Heart right ventricle (tissue), 16 donors: ENCODE measurements at regions of chr22 and their contacts with region 1.

Region 1: DNA sequence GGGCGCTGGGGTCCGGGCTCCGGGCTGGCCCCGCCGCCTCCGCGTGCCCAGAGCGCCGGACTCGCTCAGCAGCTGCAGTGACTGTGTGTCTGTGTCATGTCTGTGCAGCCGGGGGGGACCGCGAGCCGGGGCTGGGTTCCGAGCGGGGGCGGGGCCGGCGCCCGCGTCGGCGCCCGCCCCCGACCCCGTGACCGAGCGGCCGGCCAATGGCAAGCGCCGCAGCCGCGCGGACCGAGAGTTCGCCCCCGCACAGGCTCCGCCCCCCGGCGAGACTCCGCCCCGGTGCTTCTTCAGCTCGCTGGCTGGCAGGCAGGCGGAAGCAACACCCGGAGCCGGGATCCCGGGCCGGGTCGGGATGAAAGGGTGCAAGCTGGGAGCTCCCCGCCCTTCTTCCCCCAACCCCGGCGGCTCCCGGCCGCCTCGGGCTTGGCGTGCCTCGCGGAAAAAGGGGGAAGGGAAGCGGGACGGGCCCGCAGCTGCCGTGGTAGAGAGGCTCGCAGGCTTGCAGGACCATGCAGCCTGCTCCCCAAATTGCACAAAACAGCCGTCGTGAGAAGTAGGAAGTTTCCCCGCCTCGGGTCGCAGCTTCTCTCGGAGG is 750 bp upstream of the LARGE1 start:
- DNase-seq: peak; percentile 99
- ATAC-seq: peak; percentile 89 to 96 (median 94)
- H3K4me3 ChIP-seq: peak overlapping the region; percentile 49 to 87 (median 72)
- H3K27ac ChIP-seq: peak overlapping the region in 9 of 10 donors; percentile 63 to 91 (median 78)
- H3K4me1 ChIP-seq: peaks cover 0 to 56% (median 37%) of the 10 kb centered on the region in 9 donors
- H3K27me3 ChIP-seq: peaks cover 0 to 57% (median 0%) of the 10 kb centered on the region in 7 donors
- CTCF ChIP-seq: no peak

Region 2: DNA sequence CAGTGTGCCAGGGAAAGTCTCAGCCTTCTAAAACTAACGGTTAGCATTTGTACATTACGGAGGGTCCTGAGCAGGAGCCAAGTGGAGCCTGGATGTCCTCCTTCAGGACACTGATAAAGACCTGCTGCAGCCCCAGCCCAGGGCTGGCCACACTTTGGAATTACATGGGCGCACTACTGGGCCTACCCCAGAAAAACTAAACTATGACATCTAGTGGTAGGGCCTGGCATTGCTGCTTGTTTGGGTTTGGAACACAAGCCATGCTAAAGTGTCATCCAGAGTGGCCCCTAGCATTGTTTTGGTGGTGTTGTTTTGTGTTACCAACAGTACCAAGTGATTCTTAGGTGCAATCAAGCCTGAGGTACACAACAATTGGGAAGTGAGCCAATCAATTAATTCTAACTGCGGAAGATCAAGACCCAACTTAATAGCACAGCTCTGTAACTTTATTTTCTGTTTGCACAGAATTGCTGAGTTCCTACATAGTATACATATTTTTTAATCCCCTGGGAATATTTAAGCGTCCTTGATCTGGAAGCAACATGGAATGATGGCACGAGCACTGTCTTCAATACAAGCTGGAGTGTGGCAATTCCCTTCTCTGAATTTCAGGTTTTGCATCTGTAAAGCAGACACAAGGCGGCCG is 341.5 kb before region 1 on chr22:
- intact Hi-C with region 1: loop called in 2 of 10 experiments (anchors 10 kb)
- DNase-seq: peak; percentile 41 to 75
- ATAC-seq: peak; percentile 88 to 94 (median 92)
- H3K4me3 ChIP-seq: no peak overlapping the region
- H3K27ac ChIP-seq: no peak overlapping the region
- H3K4me1 ChIP-seq: peaks cover 7 to 42% (median 24%) of the 10 kb centered on the region in 9 donors
- H3K27me3 ChIP-seq: no peaks in the 10 kb centered on the region
- CTCF ChIP-seq: peak; percentile 78 to 96 (median 93)

Region 3: DNA sequence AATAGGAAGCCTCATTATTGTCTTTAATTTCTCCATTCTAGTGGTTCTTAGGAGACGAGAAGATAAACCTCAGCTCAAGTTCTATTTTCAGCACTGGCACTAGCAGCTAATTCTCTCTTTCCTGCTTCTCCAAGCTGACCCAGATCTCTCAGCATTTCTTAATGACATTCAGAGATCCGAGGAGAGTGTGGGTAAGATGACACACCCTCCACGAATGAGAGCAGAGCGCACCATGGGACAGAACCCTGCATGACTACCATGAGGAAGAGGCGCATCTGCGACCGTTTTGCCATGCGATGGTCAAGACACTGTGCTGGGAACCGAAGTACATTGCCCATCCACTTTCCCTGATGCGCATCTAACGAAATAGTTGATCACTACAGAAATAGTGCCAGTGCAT is 242.5 kb before region 1 on chr22:
- intact Hi-C with region 1: loop called in 1 of 10 experiments (anchors 10 kb)
- DNase-seq: no peak
- ATAC-seq: peak in 1 of 8 donors; percentile 18
- H3K4me3 ChIP-seq: no peak overlapping the region
- H3K27ac ChIP-seq: no peak overlapping the region
- H3K4me1 ChIP-seq: peaks cover 0 to 27% (median 12%) of the 10 kb centered on the region in 9 donors
- H3K27me3 ChIP-seq: no peaks in the 10 kb centered on the region
- CTCF ChIP-seq: no peak

Region 4: GRCh38 chr22:33841281-33842005 is 79.6 kb before region 1 on chr22:
- intact Hi-C with region 1: loop called in 1 of 10 experiments (anchors 5 kb)
- DNase-seq: no peak
- ATAC-seq: peak in 7 of 8 donors; percentile 60 to 82 (median 79)
- H3K4me3 ChIP-seq: peak overlapping the region in 3 of 10 donors; percentile 8 to 28 (median 24)
- H3K27ac ChIP-seq: peak overlapping the region in 8 of 10 donors; percentile 20 to 67 (median 58)
- H3K4me1 ChIP-seq: peaks cover 0 to 66% (median 40%) of the 10 kb centered on the region in 9 donors
- H3K27me3 ChIP-seq: no peaks in the 10 kb centered on the region
- CTCF ChIP-seq: no peak

Region 5: GRCh38 chr22:33952776-33953175 is 31.8 kb after region 1 on chr22:
- intact Hi-C with region 1: no loop called
- DNase-seq: no peak
- ATAC-seq: no peak
- H3K4me3 ChIP-seq: no peak overlapping the region
- H3K27ac ChIP-seq: no peak overlapping the region
- H3K4me1 ChIP-seq: no peaks in the 10 kb centered on the region
- H3K27me3 ChIP-seq: peaks cover 0 to 42% (median 25%) of the 10 kb centered on the region in 7 donors
- CTCF ChIP-seq: no peak

Region 6: GRCh38 chr22:34105461-34106062 is 184.5 kb after region 1 on chr22:
- intact Hi-C with region 1: loop called (anchors 1 to 10 kb)
- DNase-seq: peak; percentile 43 to 54
- ATAC-seq: peak in 5 of 8 donors; percentile 62 to 83 (median 70)
- H3K4me3 ChIP-seq: no peak overlapping the region
- H3K27ac ChIP-seq: no peak overlapping the region
- H3K4me1 ChIP-seq: no peaks in the 10 kb centered on the region
- H3K27me3 ChIP-seq: peaks cover 0 to 26% (median 8%) of the 10 kb centered on the region in 7 donors
- CTCF ChIP-seq: peak; percentile 35 to 75 (median 69)

Region 7: DNA sequence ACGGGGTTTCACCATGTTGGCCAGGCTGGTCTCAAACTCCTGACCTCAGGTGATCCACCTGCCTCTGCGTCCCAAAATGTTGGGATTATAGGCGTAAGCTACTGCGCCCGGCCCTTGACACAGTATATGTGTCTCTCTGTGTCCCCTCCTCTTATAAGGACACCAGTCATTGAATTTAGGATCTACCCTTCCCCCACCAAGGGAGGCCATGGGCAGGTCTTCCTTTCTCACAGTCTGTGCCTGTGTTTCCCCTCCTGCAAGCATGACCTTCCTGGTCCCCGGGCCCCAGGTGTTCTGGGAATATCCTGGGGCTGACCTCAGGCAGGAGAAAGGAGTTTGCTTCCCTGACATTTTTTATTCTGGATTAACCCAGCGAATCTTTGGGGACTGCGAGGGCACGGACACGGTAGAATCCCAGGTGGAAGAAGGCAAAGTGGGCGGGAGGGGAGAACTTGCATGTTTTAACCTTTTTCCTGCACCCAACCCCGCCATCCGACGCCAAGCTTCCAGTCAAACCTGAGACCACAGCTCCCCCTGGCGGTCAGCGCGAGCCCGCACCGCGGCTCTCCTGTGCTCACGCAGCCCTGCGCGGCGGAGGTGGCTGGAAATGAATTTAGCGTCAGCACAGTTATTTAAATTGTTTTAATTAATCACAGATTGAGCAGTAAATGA is 1102.8 kb after region 1 on chr22:
- intact Hi-C with region 1: loop called in 3 of 10 experiments (anchors 10 kb)
- DNase-seq: peak; percentile 45 to 73
- ATAC-seq: peak in 5 of 8 donors; percentile 51 to 75 (median 54)
- H3K4me3 ChIP-seq: no peak overlapping the region
- H3K27ac ChIP-seq: no peak overlapping the region
- H3K4me1 ChIP-seq: no peaks in the 10 kb centered on the region
- H3K27me3 ChIP-seq: peaks cover 5 to 55% (median 28%) of the 10 kb centered on the region in 7 donors
- CTCF ChIP-seq: peak; percentile 70 to 90 (median 87)